Activated B cell treated with CpG ODN at 0.5 μM for 24 hours (primary cell): ENCODE measurements at regions of chr10 and their contacts with region 1.

Region 1: GRCh38 chr10:96765406-96766240 is 45.3 kb upstream of the PIK3AP1 start:
- DNase-seq: peak; percentile 64
- ATAC-seq: peak; percentile 73
- H3K4me3 Mint-ChIP-seq: peak overlapping the region; percentile 53
- H3K27ac Mint-ChIP-seq: peak overlapping the region; percentile 83
- H3K4me1 Mint-ChIP-seq: peaks cover 39% of the 10 kb centered on the region
- H3K27me3 Mint-ChIP-seq: no peaks in the 10 kb centered on the region
- CTCF ChIP-seq: peak; percentile 68

Region 2: DNA sequence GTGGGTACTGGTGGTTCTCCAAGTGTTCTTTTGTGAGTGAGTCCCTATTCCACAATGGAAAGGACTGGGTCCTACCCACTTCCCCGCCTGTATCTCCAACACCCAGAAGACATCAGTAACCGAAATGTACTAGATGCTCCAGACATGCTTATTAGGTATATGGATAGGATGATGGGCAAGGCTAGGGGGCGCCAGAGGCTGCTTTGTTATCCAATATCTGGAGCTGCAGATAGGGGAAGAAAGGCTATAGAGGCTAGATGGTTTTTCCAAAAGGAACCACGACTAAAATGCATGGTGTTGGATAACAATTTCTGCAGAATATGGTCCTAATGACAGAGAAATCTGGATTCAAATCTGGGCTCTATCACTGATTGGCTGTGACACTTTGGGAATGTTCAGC is 122.7 kb before region 1 on chr10:
- CTCF ChIA-PET with region 1: interaction called, 12 read pairs
- POLR2A ChIA-PET with region 1: interaction called, 6 read pairs
- intact Hi-C with region 1: loop called (anchors 1 kb)
- DNase-seq: peak; percentile 54
- ATAC-seq: no peak
- H3K4me3 Mint-ChIP-seq: no peak overlapping the region
- H3K27ac Mint-ChIP-seq: peak overlapping the region; percentile 56
- H3K4me1 Mint-ChIP-seq: peaks cover 58% of the 10 kb centered on the region
- H3K27me3 Mint-ChIP-seq: no peaks in the 10 kb centered on the region
- CTCF ChIP-seq: no peak

Region 3: DNA sequence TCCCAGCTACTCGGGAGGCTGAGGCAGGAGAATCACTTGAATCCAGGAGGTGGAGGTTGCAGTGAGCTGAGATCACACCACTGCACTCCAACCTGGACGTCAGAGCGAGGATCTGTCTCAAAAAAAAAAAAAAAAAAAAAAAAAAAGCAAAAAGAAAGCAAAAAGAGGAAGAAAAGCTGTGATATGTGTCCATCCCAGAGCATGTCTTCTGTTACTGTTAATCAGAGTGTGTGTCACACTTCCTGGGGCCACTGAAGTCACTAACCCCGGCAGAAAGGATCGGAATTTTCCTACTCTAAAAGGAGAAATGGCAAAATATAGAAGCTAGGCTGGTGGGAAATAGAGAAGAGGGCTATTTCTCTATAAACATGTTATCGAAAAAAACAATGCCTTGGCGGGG is 57.2 kb before region 1 on chr10:
- CTCF ChIA-PET with region 1: no interaction called
- POLR2A ChIA-PET with region 1: interaction called, 10 read pairs
- intact Hi-C with region 1: no loop called
- DNase-seq: no peak
- ATAC-seq: peak; percentile 77
- H3K4me3 Mint-ChIP-seq: peak overlapping the region; percentile 69
- H3K27ac Mint-ChIP-seq: peak overlapping the region; percentile 96
- H3K4me1 Mint-ChIP-seq: peaks cover 83% of the 10 kb centered on the region
- H3K27me3 Mint-ChIP-seq: no peaks in the 10 kb centered on the region
- CTCF ChIP-seq: no peak

Region 4: DNA sequence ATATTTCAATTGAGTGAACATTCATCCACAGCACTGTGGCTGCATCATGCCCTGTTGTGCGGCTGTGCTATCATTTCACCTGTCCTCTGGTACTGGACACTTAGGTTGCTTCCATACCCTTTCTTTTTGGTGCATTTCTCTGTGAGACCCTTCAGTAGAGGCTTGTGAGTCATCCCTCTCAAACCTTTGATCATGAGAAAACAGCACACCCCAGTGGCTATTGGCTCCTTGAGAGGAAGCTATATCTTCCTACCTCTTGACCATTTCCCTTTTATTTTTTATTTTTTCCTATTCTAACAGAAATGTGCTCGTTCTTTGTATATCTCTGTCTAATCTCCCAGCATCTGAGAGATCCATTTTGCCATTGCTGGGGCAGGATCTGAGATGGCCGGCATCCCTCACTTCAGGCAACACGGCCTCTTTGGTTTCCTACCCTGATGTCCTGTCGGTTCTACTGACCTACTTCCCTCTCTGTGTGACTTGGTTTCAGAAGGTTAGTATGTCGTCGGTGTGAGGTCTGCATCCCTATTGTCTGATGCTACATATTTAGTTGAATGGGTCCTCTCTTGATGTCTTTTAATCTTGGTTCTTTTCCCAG is 21.5 kb before region 1 on chr10:
- CTCF ChIA-PET with region 1: interaction called, 6 read pairs
- POLR2A ChIA-PET with region 1: interaction called, 9 read pairs
- intact Hi-C with region 1: loop called (anchors 2 kb)
- DNase-seq: no peak
- ATAC-seq: no peak
- H3K4me3 Mint-ChIP-seq: no peak overlapping the region
- H3K27ac Mint-ChIP-seq: peak overlapping the region; percentile 77
- H3K4me1 Mint-ChIP-seq: peaks cover 73% of the 10 kb centered on the region
- H3K27me3 Mint-ChIP-seq: no peaks in the 10 kb centered on the region
- CTCF ChIP-seq: no peak

Region 5: DNA sequence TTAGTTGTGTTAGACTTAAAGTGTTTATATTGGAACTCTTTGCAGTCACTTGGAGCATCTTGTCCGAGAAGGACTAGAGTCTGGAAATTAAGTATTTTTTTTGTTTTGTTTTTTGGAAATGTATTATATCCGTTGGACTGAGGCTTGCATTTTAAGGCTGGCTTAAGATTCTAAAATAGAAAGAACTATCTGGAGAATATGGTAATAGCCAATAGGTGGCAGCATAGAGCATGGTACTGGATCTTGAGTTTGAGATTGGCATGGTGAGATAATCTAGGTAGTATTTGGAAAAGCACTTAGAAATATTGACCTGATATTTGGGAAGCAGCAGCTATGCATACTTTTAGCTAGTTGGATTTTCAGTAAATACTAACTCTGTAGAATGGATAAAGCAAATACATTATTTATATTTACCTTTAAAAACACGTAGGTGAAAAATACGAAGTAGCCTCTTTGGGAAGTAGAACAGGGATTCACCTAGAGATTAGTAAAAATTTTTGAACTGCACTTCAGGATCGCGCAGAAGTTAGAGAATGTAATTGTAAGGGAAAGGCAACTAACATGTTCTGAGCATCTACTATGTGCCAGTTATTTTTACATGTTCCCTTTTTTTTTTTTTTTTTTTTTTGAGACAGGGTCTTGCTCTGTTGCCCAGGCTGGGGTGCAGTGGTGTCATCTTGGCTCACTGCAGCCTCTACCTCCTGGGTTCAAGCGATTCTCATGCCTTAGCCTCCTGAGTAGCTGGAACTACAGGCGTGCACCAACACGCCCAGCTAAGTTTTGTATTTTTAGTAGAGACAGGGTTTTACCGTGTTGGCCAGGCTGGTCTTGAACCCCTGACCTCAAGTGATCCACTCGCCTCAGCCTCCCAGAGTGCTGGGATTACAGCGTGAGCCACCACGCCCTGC is 145.1 kb after region 1 on chr10:
- CTCF ChIA-PET with region 1: no interaction called
- POLR2A ChIA-PET with region 1: no interaction called
- intact Hi-C with region 1: loop called (anchors 2 kb)
- DNase-seq: no peak
- ATAC-seq: peak; percentile 60
- H3K4me3 Mint-ChIP-seq: no peak overlapping the region
- H3K27ac Mint-ChIP-seq: no peak overlapping the region
- H3K4me1 Mint-ChIP-seq: peaks cover 15% of the 10 kb centered on the region
- H3K27me3 Mint-ChIP-seq: no peaks in the 10 kb centered on the region
- CTCF ChIP-seq: peak; percentile 28

Region 6: GRCh38 chr10:97025613-97026242 is 260.1 kb after region 1 on chr10:
- CTCF ChIA-PET with region 1: interaction called, 9 read pairs
- POLR2A ChIA-PET with region 1: no interaction called
- intact Hi-C with region 1: loop called (anchors 1 kb)
- DNase-seq: no peak
- ATAC-seq: peak; percentile 71
- H3K4me3 Mint-ChIP-seq: no peak overlapping the region
- H3K27ac Mint-ChIP-seq: no peak overlapping the region
- H3K4me1 Mint-ChIP-seq: peaks cover 15% of the 10 kb centered on the region
- H3K27me3 Mint-ChIP-seq: peaks cover 3% of the 10 kb centered on the region
- CTCF ChIP-seq: peak; percentile 7

Region 7: GRCh38 chr10:97037365-97038361 is 272.0 kb after region 1 on chr10:
- CTCF ChIA-PET with region 1: interaction called, 4 read pairs
- POLR2A ChIA-PET with region 1: no interaction called
- intact Hi-C with region 1: loop called (anchors 1 kb)
- DNase-seq: peak; percentile 63
- ATAC-seq: peak; percentile 96
- H3K4me3 Mint-ChIP-seq: peak overlapping the region; percentile 83
- H3K27ac Mint-ChIP-seq: peak overlapping the region; percentile 41
- H3K4me1 Mint-ChIP-seq: peaks cover 12% of the 10 kb centered on the region
- H3K27me3 Mint-ChIP-seq: peaks cover 17% of the 10 kb centered on the region
- CTCF ChIP-seq: peak; percentile 91